Naive thymus-derived CD4-positive, alpha-beta T cell (primary cell): ENCODE measurements at regions of chr11 and their contacts with region 1.

Region 1: GRCh38 chr11:129364143-129364654 is 11.4 kb upstream of the BARX2 start:
- DNase-seq: peak; percentile 47 to 80 (median 71)
- ATAC-seq: peak; percentile 99
- H3K4me3 ChIP-seq: no peak overlapping the region
- H3K4me3 Mint-ChIP-seq: no peak overlapping the region
- H3K27ac ChIP-seq: no peak overlapping the region
- H3K27ac Mint-ChIP-seq: no peak overlapping the region
- H3K4me1 ChIP-seq: peaks cover 0 to 4% of the 10 kb centered on the region in 2 donors
- H3K4me1 Mint-ChIP-seq: no peaks in the 10 kb centered on the region
- H3K27me3 ChIP-seq: peaks cover 0 to 3% of the 10 kb centered on the region in 2 donors
- H3K27me3 Mint-ChIP-seq: peaks cover 17 to 59% (median 56%) of the 10 kb centered on the region in 5 donors

Region 2: DNA sequence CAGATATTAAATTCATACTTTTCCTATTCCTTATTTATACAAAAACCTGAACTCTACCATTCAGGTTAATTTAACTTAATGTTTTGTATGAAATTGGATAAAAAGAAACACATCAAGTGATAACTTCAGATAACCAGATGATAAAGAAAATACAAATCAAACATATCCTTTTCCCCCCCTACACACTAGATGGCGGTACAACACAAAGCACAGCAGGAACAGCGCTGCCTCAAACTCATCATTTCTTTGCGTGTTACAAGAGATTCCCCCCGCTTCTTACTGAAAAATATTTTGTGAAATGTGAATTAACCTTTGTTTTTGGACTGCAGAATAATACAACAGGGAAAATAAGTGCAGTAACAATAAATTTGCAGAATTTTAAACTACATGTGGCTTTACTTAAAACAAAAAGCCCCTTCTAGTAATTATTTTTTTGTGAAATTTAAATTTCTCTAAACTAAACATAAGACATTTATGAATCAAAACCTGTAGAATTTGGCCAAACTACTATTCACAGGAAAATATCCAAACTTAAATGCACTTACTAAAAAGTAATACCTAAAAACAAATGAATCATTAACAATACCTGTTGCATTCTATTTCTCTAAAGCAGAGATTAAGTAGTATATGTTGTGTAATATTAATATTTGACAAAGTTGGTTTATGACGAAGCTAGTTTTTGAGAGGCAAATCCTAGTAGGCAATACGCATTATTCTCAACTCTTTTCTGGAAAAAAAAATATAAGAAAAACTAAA is 246.4 kb before region 1 on chr11:
- CTCF ChIA-PET with region 1: no interaction called
- POLR2A ChIA-PET with region 1: no interaction called
- intact Hi-C with region 1: loop called in 1 of 2 experiments (anchors 1 kb)
- DNase-seq: peak in 7 of 9 donors; percentile 38 to 74 (median 62)
- ATAC-seq: peak; percentile 78
- H3K4me3 ChIP-seq: no peak overlapping the region
- H3K4me3 Mint-ChIP-seq: no peak overlapping the region
- H3K27ac ChIP-seq: no peak overlapping the region
- H3K27ac Mint-ChIP-seq: no peak overlapping the region
- H3K4me1 ChIP-seq: no peaks in the 10 kb centered on the region
- H3K4me1 Mint-ChIP-seq: peaks cover 0 to 2% (median 0%) of the 10 kb centered on the region in 7 donors
- H3K27me3 ChIP-seq: no peaks in the 10 kb centered on the region
- H3K27me3 Mint-ChIP-seq: peaks cover 0 to 5% (median 0%) of the 10 kb centered on the region in 5 donors

Region 3: GRCh38 chr11:129375751-129376657 is 11.8 kb after region 1 on chr11 and contains the start of gene BARX2:
- CTCF ChIA-PET with region 1: no interaction called
- POLR2A ChIA-PET with region 1: no interaction called
- intact Hi-C with region 1: loop called in 1 of 2 experiments (anchors 1 kb)
- DNase-seq: peak in 1 of 9 donors; percentile 54
- ATAC-seq: no peak
- H3K4me3 ChIP-seq: no peak within 1 kb of the TSS
- H3K4me3 Mint-ChIP-seq: peak within 1 kb of the TSS; percentile 56 to 86 (median 78)
- H3K27ac ChIP-seq: no peak within 1 kb of the TSS
- H3K27ac Mint-ChIP-seq: peak within 1 kb of the TSS in 1 of 9 donors; percentile 61
- H3K4me1 ChIP-seq: peaks cover 0 to 7% of the 10 kb centered on the region in 2 donors
- H3K4me1 Mint-ChIP-seq: peaks cover 18 to 38% (median 32%) of the 10 kb centered on the region in 7 donors
- H3K27me3 ChIP-seq: peaks cover 0 to 12% of the 10 kb centered on the region in 2 donors
- H3K27me3 Mint-ChIP-seq: peaks cover 75 to 85% (median 79%) of the 10 kb centered on the region in 5 donors
- total RNA-seq, gene BARX2: 0.44 TPM in 1 of 5 experiments, not detected in the others

Region 4: DNA sequence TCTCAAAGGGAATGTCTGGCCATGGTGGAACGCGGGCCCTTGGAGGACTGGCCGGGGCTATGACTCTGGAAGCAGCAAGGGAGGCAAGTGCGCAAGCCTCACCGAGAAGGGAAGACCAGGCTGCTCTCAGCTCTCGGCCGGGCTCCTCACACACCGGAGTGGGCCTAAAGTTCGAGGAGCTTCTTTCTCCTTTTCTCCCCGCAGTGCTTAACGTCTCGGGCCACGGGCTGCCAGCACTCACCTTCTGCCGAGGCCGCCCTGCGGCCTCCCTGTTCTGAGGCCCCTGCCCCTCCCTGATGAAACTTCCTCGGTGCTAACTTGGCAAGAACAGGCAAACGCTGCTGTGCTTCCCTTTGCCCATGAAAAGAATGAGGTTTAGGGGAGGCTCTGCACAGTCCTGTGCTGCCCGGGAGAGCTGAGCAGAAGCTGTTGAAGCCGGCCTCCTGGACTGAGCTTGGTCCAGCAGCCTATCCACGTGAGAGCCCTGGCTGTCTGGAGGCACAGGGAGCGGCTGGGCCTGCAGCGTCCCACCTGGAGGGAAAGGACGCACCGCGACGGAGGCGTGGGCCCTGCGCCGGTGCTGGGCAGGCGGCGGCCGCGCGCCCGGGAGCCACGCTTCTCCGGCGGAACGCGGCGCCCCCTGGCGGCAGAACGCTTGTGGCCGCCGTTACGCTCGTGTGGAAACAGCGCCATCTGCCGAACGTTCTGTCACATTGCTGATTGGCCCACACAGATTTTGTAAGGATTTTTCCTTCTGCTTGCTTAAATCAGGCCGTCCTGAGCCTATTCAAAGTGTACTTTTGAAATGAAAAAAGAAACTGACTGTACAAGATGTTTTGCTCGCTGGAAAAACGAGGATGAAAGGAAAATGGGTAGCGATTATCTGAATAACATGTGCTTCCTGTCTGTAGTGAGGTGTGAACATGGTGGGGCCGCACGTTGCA is 386.4 kb after region 1 on chr11:
- CTCF ChIA-PET with region 1: interaction called, 17 read pairs
- POLR2A ChIA-PET with region 1: no interaction called
- intact Hi-C with region 1: loop called (anchors 1 kb)
- DNase-seq: peak; percentile 53 to 89 (median 81)
- ATAC-seq: peak; percentile 97
- H3K4me3 ChIP-seq: peak overlapping the region; percentile 51
- H3K4me3 Mint-ChIP-seq: peak overlapping the region in 9 of 10 donors; percentile 25 to 76 (median 61)
- H3K27ac ChIP-seq: no peak overlapping the region
- H3K27ac Mint-ChIP-seq: peak overlapping the region in 1 of 9 donors; percentile 48
- H3K4me1 ChIP-seq: peaks cover 2 to 5% of the 10 kb centered on the region in 2 donors
- H3K4me1 Mint-ChIP-seq: peaks cover 0 to 9% (median 3%) of the 10 kb centered on the region in 7 donors
- H3K27me3 ChIP-seq: no peaks in the 10 kb centered on the region
- H3K27me3 Mint-ChIP-seq: peaks cover 0 to 19% (median 0%) of the 10 kb centered on the region in 5 donors

Region 5: DNA sequence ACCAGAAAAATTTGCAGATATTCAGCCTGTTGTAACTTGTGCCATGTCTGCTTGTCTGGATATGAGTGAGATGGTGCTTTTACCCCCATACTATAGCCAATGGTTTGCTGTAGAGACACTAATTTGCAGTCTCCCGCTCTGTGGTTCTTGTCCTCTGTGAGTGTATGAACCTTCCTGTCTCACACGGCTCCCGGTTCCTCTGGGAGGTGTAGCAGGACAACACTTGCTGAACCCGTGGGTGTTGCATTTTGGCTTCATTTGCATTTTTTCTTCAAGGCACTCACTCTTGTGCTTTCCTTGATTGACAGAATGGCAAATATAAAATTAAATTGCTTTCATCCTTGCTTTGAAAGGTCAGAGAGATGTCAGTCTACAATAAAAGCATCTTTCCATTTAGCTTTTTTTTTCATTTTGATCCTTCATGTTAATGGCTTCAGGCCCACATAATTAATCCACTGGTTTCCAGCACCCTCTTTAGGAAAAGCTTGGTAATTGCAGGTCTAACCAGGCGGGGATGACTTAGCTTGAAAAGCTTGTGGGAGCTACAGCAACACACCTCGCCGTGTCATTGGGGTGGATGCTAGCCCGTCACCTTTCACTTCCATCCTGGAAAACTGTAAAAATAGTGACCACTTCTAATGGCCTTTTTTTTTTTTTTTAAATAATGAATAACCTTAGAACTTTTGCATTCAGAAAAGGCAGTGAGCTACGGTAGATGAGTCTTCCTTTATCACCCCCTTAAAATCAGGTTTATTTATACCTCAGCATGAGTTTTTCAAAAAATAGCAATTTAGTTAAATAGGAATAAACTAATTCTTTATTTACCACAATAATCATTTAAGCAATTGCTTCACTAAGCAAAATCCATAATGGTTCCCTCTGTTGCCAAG is 768.0 kb after region 1 on chr11:
- CTCF ChIA-PET with region 1: interaction called, 3 read pairs
- POLR2A ChIA-PET with region 1: no interaction called
- intact Hi-C with region 1: loop called (anchors 1 to 5 kb)
- DNase-seq: peak in 8 of 9 donors; percentile 38 to 76 (median 68)
- ATAC-seq: peak; percentile 91
- H3K4me3 ChIP-seq: no peak overlapping the region
- H3K4me3 Mint-ChIP-seq: no peak overlapping the region
- H3K27ac ChIP-seq: no peak overlapping the region
- H3K27ac Mint-ChIP-seq: peak overlapping the region in 1 of 9 donors; percentile 6
- H3K4me1 ChIP-seq: no peaks in the 10 kb centered on the region
- H3K4me1 Mint-ChIP-seq: no peaks in the 10 kb centered on the region
- H3K27me3 ChIP-seq: no peaks in the 10 kb centered on the region
- H3K27me3 Mint-ChIP-seq: no peaks in the 10 kb centered on the region